SK-N-SH (cell line): ENCODE measurements at regions of chr3 and their contacts with region 1.

Region 1: DNA sequence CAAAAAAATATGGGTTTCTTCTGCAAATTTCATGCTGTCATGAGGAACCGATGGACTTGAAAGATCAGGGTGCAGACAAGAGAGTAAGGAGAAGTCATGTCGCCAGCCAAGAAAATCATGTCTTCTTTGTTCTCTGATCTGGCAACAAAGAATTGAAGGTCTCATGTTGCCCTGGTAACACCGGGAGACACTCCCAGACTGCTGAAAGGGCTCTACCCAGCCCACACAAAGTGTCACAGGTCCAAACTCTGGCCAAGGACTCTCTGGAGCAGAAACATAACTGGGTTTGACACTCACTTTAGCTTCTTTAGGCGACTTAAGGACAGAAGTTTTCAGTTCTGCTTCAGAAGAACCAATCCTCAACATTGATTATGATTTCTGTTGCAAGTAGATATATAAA is 42.9 kb downstream of the SIDT1 start:
- DNase-seq: no peak
- H3K4me3 ChIP-seq: no peak overlapping the region
- H3K27ac ChIP-seq: no peak overlapping the region
- H3K4me1 ChIP-seq: no peaks in the 10 kb centered on the region
- H3K27me3 ChIP-seq: peaks cover 5% of the 10 kb centered on the region; the same call in 1 of the 2 replicates
- CTCF ChIP-seq: no peak
- EP300 ChIP-seq: no peak
- RAD21 ChIP-seq: no peak

Region 2: DNA sequence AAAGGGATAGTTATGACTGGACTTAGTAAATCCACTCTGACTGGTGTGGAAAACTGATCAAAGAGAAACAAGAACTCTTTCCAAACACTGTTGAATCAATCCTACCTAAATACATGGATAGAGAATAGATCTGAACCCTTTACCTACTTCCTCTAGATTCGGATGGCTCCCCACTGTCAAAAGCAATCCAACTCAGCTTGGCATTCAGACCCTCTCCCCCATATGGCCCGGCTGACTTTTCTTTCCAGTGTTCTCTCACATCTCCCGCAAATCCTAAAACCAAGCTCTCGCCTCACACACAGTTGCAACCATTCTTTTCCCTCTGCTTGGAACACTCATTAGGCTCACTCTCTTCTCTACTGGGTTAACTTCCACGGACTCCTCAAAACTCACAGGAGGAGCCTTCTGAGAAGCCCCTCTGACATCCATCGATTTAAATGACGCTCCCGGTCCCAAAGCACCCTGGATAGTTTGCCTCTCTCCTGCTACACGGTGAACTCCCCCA is 60.9 kb before region 1 on chr3:
- CTCF ChIA-PET with region 1: interaction called, 46 read pairs
- POLR2A ChIA-PET with region 1: interaction called, 5 read pairs
- DNase-seq: no peak
- H3K4me3 ChIP-seq: peak overlapping the region; percentile 76 to 89
- H3K27ac ChIP-seq: peak overlapping the region; percentile 83 to 89
- H3K4me1 ChIP-seq: peaks cover 3 to 5% of the 10 kb centered on the region in 2 experiments; a peak in 3 of 4 replicates
- H3K27me3 ChIP-seq: no peaks in the 10 kb centered on the region
- CTCF ChIP-seq: no peak
- EP300 ChIP-seq: no peak
- RAD21 ChIP-seq: no peak

Region 3: GRCh38 chr3:113560831-113561623 is 14.2 kb before region 1 on chr3:
- CTCF ChIA-PET with region 1: interaction called, 22 read pairs
- POLR2A ChIA-PET with region 1: no interaction called
- DNase-seq: peak; percentile 39
- H3K4me3 ChIP-seq: no peak overlapping the region
- H3K27ac ChIP-seq: 0 out of 4 replicates have a peak overlapping the region, but pooled peaks of 1 of the 2 experiments have one; percentile 12
- H3K4me1 ChIP-seq: peaks cover 3 to 15% of the 10 kb centered on the region in 2 experiments; a peak in 3 of 4 replicates
- H3K27me3 ChIP-seq: no peaks in the 10 kb centered on the region; the same call in 1 of the 2 replicates
- CTCF ChIP-seq: no peak
- EP300 ChIP-seq: no peak
- RAD21 ChIP-seq: no peak

Region 4: DNA sequence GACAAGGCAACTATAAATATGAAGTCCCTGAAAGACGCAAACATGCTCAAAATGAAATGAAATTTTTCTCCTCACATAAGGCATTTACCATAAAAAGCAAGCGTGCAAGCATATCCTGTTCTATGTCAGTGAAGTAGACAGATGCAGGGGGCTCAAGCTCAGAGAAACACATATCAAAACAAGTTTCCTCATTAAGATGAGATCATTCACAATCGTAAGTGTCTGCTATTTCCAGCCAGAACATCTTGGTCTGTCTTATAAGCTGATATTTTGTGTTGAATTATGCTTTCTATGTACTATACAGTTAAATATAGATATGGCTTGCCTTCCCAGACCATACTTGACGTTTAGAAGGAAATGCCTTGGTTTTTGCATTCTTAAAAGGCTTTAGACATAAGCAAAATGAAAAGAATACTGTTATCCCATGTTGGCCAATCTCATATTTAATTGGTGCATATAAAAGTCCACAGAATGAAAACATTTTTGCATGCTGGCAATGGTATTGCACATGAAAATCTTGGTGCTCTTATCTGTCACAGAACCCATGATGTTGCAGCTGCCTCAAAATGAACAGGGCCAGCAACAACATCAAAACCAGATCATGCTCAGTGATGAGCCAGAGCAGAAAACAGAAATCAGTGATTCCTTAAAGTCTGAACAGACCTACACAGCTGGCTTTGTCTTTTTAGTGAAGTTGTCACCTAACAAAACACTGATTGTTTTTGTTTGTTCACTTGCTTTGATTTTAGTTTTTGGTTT is 22.6 kb after region 1 on chr3:
- CTCF ChIA-PET with region 1: interaction called, 16 read pairs
- POLR2A ChIA-PET with region 1: no interaction called
- DNase-seq: no peak
- H3K4me3 ChIP-seq: no peak overlapping the region
- H3K27ac ChIP-seq: no peak overlapping the region
- H3K4me1 ChIP-seq: no peaks in the 10 kb centered on the region; a peak in 1 of 4 replicates
- H3K27me3 ChIP-seq: no peaks in the 10 kb centered on the region
- CTCF ChIP-seq: no peak
- EP300 ChIP-seq: no peak
- RAD21 ChIP-seq: no peak

Region 5: DNA sequence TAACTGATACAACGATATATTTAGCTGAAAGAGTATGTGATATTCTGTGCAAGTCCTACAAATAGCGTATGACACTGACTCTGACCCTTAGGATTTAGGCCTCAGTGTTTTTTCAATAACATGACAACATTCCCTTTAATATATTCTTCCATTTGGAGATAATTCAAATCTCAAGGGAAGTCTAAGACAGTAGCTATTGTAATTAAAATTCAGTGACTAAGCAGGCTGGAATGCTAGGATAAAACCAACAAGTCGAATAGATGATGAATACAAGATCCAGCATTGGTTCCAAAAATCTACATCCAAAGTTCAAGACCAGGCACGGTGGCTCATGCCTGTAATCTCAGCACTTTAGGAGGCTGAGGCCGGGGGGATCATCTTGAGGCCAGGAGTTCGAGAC is 537.5 kb after region 1 on chr3:
- CTCF ChIA-PET with region 1: no interaction called
- POLR2A ChIA-PET with region 1: no interaction called
- DNase-seq: no peak
- H3K4me3 ChIP-seq: no peak overlapping the region
- H3K27ac ChIP-seq: no peak overlapping the region
- H3K4me1 ChIP-seq: no peaks in the 10 kb centered on the region
- H3K27me3 ChIP-seq: no peaks in the 10 kb centered on the region
- CTCF ChIP-seq: no peak
- EP300 ChIP-seq: no peak
- RAD21 ChIP-seq: no peak